IMR-90 (cell line): ENCODE measurements at regions of chr14 and their contacts with region 1.

Region 1: DNA sequence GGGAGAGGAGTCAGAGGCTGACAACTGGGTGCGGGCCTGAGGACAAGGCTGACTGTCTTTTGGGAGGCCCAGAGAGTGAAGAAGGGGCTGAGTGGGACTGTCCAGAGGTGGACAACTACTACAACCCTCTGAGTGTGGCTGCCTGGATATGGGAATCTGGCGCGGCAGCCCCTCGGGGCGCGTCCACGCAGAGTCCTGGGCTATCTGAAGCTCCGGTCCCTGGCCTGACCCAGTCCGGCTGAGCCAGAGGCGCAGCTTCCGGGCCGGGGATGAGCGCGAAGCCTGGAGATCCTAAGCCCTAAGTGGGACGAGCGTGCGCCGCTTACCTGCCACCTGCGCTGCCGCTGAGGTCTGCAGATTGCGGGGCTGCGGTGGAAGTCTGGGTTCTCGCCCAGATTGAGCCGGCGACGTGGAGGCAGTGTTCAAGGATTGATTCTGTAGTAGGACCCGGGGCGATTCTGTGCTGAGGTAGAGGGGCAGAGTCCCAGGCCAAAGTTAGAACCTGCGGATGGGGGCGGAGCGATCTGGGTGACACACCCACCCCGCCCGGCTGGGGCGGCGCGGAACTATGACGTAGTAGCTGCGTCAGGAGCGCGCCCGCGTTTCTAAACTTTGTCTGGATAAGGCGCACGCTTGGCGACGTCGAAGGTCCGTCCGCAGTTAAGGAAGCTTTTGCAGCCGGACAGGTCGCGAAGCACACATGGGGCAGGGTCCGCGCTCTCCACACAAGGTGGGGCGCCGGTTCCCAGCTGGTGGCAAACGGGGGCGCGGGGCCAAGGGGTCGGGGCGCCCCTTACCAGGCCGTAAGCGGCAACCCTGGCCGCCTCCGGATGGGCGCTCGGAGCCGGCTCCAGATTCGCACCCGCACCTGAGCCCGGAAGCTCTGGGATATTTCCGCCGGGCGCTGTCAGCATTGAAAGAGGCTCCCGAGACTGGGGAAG is at the starts of genes DHRS1 and NOP9:
- DNase-seq: peak; percentile 85
- ATAC-seq: peak; percentile 83
- H3K4me3 ChIP-seq: peak within 1 kb of the TSS; percentile 63
- H3K27ac ChIP-seq: peak within 1 kb of the TSS; percentile 41
- H3K4me1 ChIP-seq: peaks cover 9% of the 10 kb centered on the region
- H3K27me3 ChIP-seq: no peaks in the 10 kb centered on the region
- CTCF ChIP-seq: no peak
- POLR2A ChIP-seq: peak; percentile 52; the same call in 1 of the 2 replicates
- RAD21 ChIP-seq: no peak
- total RNA-seq, gene DHRS1: 13.1 and 15.8 TPM in 2 replicates
- total RNA-seq, gene NOP9: 22.5 and 25.8 TPM in 2 replicates

Region 2: GRCh38 chr14:24058260-24058950 is 241.1 kb before region 1 on chr14:
- CTCF ChIA-PET with region 1: no interaction called
- POLR2A ChIA-PET with region 1: no interaction called
- dilution Hi-C with region 1: no loop called
- in situ Hi-C with region 1: no loop called
- intact Hi-C with region 1: loop called (anchors 1 kb)
- DNase-seq: peak; percentile 64
- ATAC-seq: peak; percentile 98
- H3K4me3 ChIP-seq: no peak overlapping the region
- H3K27ac ChIP-seq: no peak overlapping the region
- H3K4me1 ChIP-seq: no peaks in the 10 kb centered on the region
- H3K27me3 ChIP-seq: peaks cover 34% of the 10 kb centered on the region; the same call in 1 of the 2 replicates
- CTCF ChIP-seq: peak; percentile 93
- POLR2A ChIP-seq: no peak
- RAD21 ChIP-seq: peak; percentile 94

Region 3: DNA sequence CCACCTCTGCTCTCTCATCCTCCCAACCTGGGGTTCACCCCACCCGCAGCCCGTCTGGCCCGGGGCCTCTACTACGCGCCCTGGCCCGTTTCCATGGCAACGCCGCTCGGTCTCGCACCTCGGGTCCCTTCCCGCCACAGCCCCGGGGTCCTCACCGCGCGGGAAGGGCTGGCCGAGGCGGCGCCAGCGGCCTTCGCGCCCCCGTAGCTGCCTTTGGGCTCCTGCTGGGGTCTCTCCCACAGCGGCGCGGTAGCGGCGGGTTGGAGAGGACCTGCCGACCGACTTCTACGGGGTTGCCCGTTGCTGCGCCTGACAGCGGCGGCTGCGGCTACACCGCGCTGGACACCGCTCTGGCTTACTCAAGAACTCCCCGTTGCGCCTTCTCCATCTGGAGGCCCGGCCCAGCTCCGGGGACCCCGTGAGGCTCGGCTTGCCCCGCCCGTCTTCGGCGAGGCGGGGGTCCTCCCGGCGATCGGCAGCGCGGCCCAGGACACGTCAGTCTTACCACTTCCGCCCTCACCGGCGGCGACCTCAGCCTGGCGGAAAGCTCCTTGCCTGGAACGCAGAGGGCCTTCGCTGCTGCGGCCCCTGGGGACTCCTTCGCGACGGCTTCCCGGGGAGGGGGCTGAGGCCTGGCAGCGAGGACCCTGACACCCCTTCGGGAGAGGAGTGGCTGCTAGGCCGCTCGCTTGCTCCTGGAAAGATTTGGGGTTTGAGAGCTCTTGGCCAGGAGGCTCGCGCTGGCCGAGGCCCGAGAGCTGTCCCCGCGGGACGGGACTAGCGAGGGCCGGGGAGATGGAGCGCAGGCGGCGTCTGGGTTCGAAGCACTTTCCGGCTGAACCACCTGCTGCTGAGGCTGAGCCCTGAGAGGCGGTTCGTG is 104.1 kb before region 1 on chr14 and contains the start of gene TM9SF1:
- CTCF ChIA-PET with region 1: no interaction called
- POLR2A ChIA-PET with region 1: no interaction called
- dilution Hi-C with region 1: no loop called
- in situ Hi-C with region 1: no loop called
- intact Hi-C with region 1: loop called (anchors 2 kb)
- DNase-seq: peak; percentile 87
- ATAC-seq: peak; percentile 93
- H3K4me3 ChIP-seq: peak within 1 kb of the TSS; percentile 89
- H3K27ac ChIP-seq: peak within 1 kb of the TSS; percentile 99
- H3K4me1 ChIP-seq: peaks cover 8% of the 10 kb centered on the region
- H3K27me3 ChIP-seq: no peaks in the 10 kb centered on the region
- CTCF ChIP-seq: no peak
- POLR2A ChIP-seq: peak; percentile 72
- RAD21 ChIP-seq: no peak
- total RNA-seq, gene TM9SF1: 51.9 and 65.6 TPM in 2 replicates

Region 4: GRCh38 chr14:24241829-24242443 is 57.6 kb before region 1 on chr14:
- CTCF ChIA-PET with region 1: interaction called, 23 read pairs
- POLR2A ChIA-PET with region 1: interaction called, 6 read pairs
- dilution Hi-C with region 1: no loop called
- in situ Hi-C with region 1: loop called (anchors 5 kb)
- intact Hi-C with region 1: loop called (anchors 1 kb)
- DNase-seq: peak; percentile 89
- ATAC-seq: peak; percentile 93
- H3K4me3 ChIP-seq: peak overlapping the region; percentile 82
- H3K27ac ChIP-seq: peak overlapping the region; percentile 90
- H3K4me1 ChIP-seq: peaks cover 13% of the 10 kb centered on the region
- H3K27me3 ChIP-seq: no peaks in the 10 kb centered on the region
- CTCF ChIP-seq: peak; percentile 45
- POLR2A ChIP-seq: no peak
- RAD21 ChIP-seq: no peak

Region 5: GRCh38 chr14:24327303-24327702 is 27.8 kb after region 1 on chr14:
- CTCF ChIA-PET with region 1: no interaction called
- POLR2A ChIA-PET with region 1: interaction called, 18 read pairs
- dilution Hi-C with region 1: no loop called
- in situ Hi-C with region 1: no loop called
- intact Hi-C with region 1: no loop called
- DNase-seq: no peak
- ATAC-seq: no peak
- H3K4me3 ChIP-seq: no peak overlapping the region
- H3K27ac ChIP-seq: no peak overlapping the region
- H3K4me1 ChIP-seq: no peaks in the 10 kb centered on the region; the same call in 1 of the 2 replicates
- H3K27me3 ChIP-seq: peaks cover 31% of the 10 kb centered on the region
- CTCF ChIP-seq: no peak
- POLR2A ChIP-seq: no peak
- RAD21 ChIP-seq: no peak

Region 6: GRCh38 chr14:24612196-24612595 is 312.7 kb after region 1 on chr14:
- CTCF ChIA-PET with region 1: no interaction called
- POLR2A ChIA-PET with region 1: no interaction called
- dilution Hi-C with region 1: no loop called
- in situ Hi-C with region 1: no loop called
- intact Hi-C with region 1: no loop called
- DNase-seq: no peak
- ATAC-seq: no peak
- H3K4me3 ChIP-seq: no peak overlapping the region
- H3K27ac ChIP-seq: no peak overlapping the region
- H3K4me1 ChIP-seq: no peaks in the 10 kb centered on the region
- H3K27me3 ChIP-seq: no peaks in the 10 kb centered on the region
- CTCF ChIP-seq: no peak
- POLR2A ChIP-seq: no peak
- RAD21 ChIP-seq: no peak